BJ (cell line): ENCODE measurements at regions of chr2 and their contacts with region 1.

Region 1: DNA sequence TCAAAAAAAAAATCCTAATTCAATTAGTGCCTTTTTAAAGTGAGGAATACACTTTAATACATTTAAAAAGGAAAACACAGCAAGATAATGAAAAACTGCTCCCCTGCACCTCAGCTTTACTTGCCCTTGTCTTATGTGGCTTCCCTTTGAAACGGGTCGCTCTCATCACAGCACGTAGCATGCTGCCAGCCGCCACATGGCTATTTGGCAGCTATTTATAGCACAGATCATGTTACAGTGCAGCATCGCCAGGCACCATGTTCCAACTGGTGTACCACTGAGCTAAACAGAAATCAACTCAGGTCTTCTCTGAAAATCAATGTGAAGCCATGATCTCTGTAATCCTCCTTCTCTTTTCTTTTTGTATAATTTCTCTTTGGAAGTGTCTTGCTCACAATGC is 65.1 kb downstream of the TMEM182 start:
- DNase-seq: no peak
- H3K4me3 ChIP-seq: no peak overlapping the region
- H3K27me3 ChIP-seq: no peaks in the 10 kb centered on the region
- CTCF ChIP-seq: no peak

Region 2: DNA sequence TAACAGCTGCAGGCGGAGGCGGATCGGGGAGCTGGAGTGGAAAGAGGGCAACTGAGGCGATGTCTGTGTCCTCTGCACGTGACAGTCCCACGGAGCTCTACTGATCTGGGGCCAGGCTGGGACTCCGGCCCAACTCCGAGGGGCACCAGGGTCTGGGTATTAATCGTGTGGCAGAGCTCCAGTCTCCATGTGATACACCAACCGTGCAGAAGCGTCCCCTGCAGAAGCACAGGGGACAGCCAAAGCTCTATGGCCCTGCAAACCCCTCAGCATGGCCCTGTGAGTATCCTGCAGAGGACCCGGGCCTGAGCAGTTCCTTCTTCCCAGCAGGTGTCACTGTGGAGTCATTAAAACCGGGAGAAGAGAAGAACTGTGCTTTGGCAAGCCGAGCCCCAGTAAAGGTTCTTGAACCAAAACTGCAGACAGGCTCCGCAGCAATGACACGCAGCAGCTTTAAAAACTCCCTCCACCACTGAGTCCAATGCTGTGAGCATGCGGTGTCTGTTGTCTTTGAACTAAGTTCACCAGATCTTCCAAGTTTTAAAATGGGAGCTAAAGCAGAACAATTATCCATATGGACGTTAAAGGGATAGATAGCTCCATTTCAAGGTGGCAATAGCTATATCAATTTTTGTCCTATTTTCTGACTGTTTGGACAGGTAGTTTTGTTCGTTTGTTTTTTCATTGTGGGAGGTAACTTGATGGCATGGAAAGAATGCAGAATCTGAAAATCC is 14.4 kb after region 1 on chr2:
- CTCF ChIA-PET with region 1: interaction called, 13 read pairs
- POLR2A ChIA-PET with region 1: no interaction called
- DNase-seq: no peak
- H3K4me3 ChIP-seq: no peak overlapping the region
- H3K27me3 ChIP-seq: no peaks in the 10 kb centered on the region
- CTCF ChIP-seq: peak; percentile 63